GM13977 (cell line): ENCODE measurements at regions of chr11 and their contacts with region 1.

Region 1: DNA sequence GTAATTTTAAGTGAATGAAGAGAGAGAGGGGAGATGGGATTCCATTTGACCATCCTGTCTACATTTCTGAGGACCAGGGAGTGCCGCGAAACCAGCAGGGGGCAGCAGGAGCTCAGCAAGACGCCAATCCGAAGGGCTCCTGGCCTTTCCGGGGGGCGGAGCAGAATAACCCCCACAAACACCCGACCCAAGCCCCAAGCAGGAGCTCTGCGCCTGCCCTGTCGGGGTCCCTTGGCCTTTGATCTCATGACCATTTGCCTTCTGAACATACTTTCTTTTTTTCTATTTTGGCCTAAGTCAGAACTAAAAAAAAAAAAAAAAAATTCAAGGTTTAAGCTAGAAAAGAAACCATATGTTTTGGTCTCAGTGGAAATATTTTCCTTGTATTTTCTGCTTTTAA is 21.9 kb upstream of the SCN2B start:
- DNase-seq: peak; percentile 75
- CTCF ChIP-seq: peak; percentile 92

Region 2: GRCh38 chr11:117610045-117610444 is 588.3 kb before region 1 on chr11:
- in situ Hi-C with region 1: no loop called
- DNase-seq: peak; percentile 49
- CTCF ChIP-seq: no peak

Region 3: GRCh38 chr11:118290923-118291322 is 92.6 kb after region 1 on chr11:
- in situ Hi-C with region 1: loop called (anchors 5 kb)
- DNase-seq: peak; percentile 43
- CTCF ChIP-seq: peak; percentile 59

Region 4: GRCh38 chr11:118448294-118448693 is 249.9 kb after region 1 on chr11:
- in situ Hi-C with region 1: no loop called
- DNase-seq: peak; percentile 70
- CTCF ChIP-seq: no peak